ENCODE measurements at regions of chr21 and their contacts with region 1.

Region 1: DNA sequence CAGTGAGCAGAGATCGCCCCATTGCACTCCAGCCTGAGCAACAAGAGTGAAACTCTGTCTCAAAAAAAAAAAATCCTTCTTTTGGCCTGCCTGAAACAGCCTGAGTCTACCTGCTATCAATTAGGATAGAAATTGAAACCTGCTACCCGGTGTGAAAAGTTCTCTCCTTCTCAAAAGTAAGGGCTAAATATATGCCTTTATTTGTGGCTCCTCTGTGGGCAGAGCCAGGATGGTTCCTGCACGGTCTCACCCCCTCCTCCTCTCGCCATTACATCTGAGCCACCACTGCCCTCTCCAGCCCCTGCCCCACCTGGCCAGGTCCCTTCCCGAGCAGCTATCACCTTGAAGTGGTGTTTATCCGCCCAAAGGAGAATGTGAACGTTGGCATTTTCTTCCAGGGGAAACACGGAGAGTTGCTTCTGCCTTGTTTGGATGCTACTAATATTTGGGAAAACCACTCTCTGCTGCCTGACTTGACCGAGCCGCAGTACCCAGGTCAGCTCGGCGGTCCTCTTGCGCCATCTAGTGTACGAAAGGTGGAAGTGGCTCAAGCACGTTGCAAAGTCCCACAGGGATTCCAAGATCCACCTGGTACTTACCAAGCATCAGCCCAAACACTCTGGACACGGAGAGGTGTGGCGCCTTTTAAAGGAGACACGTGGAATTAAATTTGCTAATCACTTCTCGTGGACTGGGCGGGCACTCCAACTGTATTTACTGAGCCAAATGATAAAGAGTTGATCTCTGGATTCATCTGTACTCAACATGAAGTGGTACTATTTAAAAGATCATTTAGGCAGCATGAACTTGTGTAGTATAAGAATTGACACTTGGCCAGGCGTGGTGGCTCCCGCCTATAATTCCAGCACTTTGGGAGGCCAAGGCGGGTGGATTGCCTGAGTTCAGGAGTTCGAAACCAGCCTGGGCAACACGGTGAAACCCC is 31.9 kb downstream of the SETD4 start:
- DNase-seq: peak; percentile 73
- H3K4me3 ChIP-seq: no peak overlapping the region
- H3K27ac ChIP-seq: no peak overlapping the region
- H3K4me1 ChIP-seq: no peaks in the 10 kb centered on the region
- H3K27me3 ChIP-seq: peaks cover 0 to 2% of the 10 kb centered on the region in 2 experiments
- CTCF ChIP-seq: peak; percentile 90 to 92
- POLR2A ChIP-seq: no peak

Region 2: GRCh38 chr21:34693192-34693810 is 1335.1 kb before region 1 on chr21:
- CTCF ChIA-PET with region 1: interaction called, 58 read pairs
- POLR2A ChIA-PET with region 1: no interaction called
- dilution Hi-C with region 1: no loop called
- intact Hi-C with region 1: loop called (anchors 1 kb)
- DNase-seq: peak; percentile 57
- H3K4me3 ChIP-seq: no peak overlapping the region
- H3K27ac ChIP-seq: no peak overlapping the region
- H3K4me1 ChIP-seq: no peaks in the 10 kb centered on the region
- H3K27me3 ChIP-seq: peaks cover 14 to 30% of the 10 kb centered on the region in 2 experiments
- CTCF ChIP-seq: peak; percentile 79 to 81
- POLR2A ChIP-seq: no peak

Region 3: GRCh38 chr21:36437745-36438128 is 409.3 kb after region 1 on chr21:
- CTCF ChIA-PET with region 1: no interaction called
- POLR2A ChIA-PET with region 1: no interaction called
- dilution Hi-C with region 1: no loop called
- intact Hi-C with region 1: no loop called
- DNase-seq: peak; percentile 74
- H3K4me3 ChIP-seq: no peak overlapping the region
- H3K27ac ChIP-seq: peak overlapping the region; percentile 47
- H3K4me1 ChIP-seq: peaks cover 28% of the 10 kb centered on the region
- H3K27me3 ChIP-seq: no peaks in the 10 kb centered on the region
- CTCF ChIP-seq: no peak
- POLR2A ChIP-seq: peak; percentile 55

Measured in endothelial cell of umbilical vein (primary cell).